MCF 10A (cell line): ENCODE measurements at regions of chr14 and their contacts with region 1.

Region 1: GRCh38 chr14:75560962-75561432 is 17.4 kb upstream of the FLVCR2 start:
- DNase-seq: peak; percentile 93
- H3K4me3 Mint-ChIP-seq: no peak overlapping the region
- H3K27ac Mint-ChIP-seq: no peak overlapping the region
- H3K4me1 Mint-ChIP-seq: peaks cover 26% of the 10 kb centered on the region
- H3K27me3 Mint-ChIP-seq: no peaks in the 10 kb centered on the region
- CTCF ChIP-seq: peak; percentile 78

Region 2: GRCh38 chr14:75293920-75294642 is 266.9 kb before region 1 on chr14:
- CTCF ChIA-PET with region 1: interaction called, 4 read pairs
- POLR2A ChIA-PET with region 1: interaction called, 10 read pairs
- intact Hi-C with region 1: no loop called
- DNase-seq: peak; percentile 96
- H3K4me3 Mint-ChIP-seq: peak overlapping the region; percentile 67
- H3K27ac Mint-ChIP-seq: peak overlapping the region; percentile 71
- H3K4me1 Mint-ChIP-seq: peaks cover 22% of the 10 kb centered on the region
- H3K27me3 Mint-ChIP-seq: no peaks in the 10 kb centered on the region
- CTCF ChIP-seq: no peak

Region 3: GRCh38 chr14:75373616-75374015 is 187.4 kb before region 1 on chr14:
- CTCF ChIA-PET with region 1: no interaction called
- POLR2A ChIA-PET with region 1: no interaction called
- intact Hi-C with region 1: no loop called
- DNase-seq: no peak
- H3K4me3 Mint-ChIP-seq: no peak overlapping the region
- H3K27ac Mint-ChIP-seq: no peak overlapping the region
- H3K4me1 Mint-ChIP-seq: no peaks in the 10 kb centered on the region
- H3K27me3 Mint-ChIP-seq: peaks cover 27% of the 10 kb centered on the region
- CTCF ChIP-seq: no peak

Region 4: DNA sequence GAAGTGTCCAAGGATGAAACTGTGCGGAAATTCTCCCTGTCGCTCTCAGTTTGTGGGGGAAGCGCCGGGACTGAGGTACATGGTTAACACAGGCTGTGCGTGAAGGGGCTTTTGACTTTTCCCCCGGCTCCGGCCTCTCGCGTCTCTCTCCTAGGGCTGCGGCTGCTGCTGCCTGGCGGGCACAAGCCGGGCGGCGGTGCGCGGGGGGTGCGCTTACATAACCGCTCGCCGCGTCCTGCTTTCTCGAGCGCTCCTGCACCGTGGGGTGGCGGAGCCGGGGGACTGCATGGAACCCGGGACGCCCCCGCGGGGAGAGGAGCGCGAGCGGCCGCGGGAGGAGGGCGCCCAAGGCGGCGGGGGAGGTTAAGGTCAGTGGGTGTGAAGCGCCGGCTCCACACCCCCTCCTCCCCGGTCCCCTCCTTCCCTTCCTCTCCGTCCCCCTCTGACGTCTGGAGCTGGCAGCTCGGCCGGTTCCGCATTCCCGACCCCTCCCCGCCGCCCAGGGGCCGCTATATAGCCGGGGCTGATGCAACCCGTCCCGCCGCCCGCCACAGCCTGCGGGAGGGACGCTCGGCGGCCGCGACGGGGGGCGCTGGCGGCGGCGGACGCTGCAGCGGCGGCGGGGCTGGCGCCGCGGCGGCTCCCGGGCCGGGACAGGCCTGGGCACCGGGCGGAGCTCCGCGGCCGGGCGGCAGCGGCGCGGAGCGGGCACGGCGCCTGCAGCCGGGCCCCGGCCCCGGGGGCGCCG is 133.3 kb before region 1 on chr14 and contains the start of gene JDP2:
- CTCF ChIA-PET with region 1: interaction called, 14 read pairs
- POLR2A ChIA-PET with region 1: interaction called, 4 read pairs
- intact Hi-C with region 1: loop called (anchors 2 kb)
- DNase-seq: peak; percentile 62
- H3K4me3 Mint-ChIP-seq: peak within 1 kb of the TSS; percentile 76
- H3K27ac Mint-ChIP-seq: no peak within 1 kb of the TSS
- H3K4me1 Mint-ChIP-seq: peaks cover 17% of the 10 kb centered on the region
- H3K27me3 Mint-ChIP-seq: no peaks in the 10 kb centered on the region
- CTCF ChIP-seq: no peak
- total RNA-seq, gene JDP2: 38.9 and 45.3 TPM in 2 replicates

Region 5: DNA sequence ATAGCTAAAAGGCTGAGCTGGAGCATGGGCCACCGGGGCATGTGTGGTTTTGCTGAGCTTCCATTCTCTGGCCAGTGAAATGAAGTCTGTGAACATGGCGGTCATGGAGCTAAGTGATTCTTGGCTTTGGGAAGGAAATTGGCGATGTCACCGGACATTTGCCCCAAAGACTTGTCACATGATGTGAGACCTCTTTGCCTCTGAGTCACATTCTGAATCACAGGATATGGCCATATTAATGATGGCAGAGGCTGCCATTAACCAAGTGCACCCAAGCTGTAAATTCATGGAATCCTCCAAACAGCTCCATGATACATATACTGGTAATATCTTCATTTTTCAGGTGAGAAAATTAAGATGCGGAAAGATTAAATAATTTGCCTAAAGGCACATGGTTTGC is 66.1 kb before region 1 on chr14:
- CTCF ChIA-PET with region 1: interaction called, 92 read pairs
- POLR2A ChIA-PET with region 1: interaction called, 19 read pairs
- intact Hi-C with region 1: no loop called
- DNase-seq: no peak
- H3K4me3 Mint-ChIP-seq: no peak overlapping the region
- H3K27ac Mint-ChIP-seq: no peak overlapping the region
- H3K4me1 Mint-ChIP-seq: no peaks in the 10 kb centered on the region
- H3K27me3 Mint-ChIP-seq: no peaks in the 10 kb centered on the region
- CTCF ChIP-seq: no peak

Region 6: GRCh38 chr14:75539561-75540478 is 21.2 kb before region 1 on chr14:
- CTCF ChIA-PET with region 1: interaction called, 11 read pairs
- POLR2A ChIA-PET with region 1: interaction called, 17 read pairs
- intact Hi-C with region 1: loop called (anchors 1 kb)
- DNase-seq: no peak
- H3K4me3 Mint-ChIP-seq: no peak overlapping the region
- H3K27ac Mint-ChIP-seq: no peak overlapping the region
- H3K4me1 Mint-ChIP-seq: peaks cover 21% of the 10 kb centered on the region
- H3K27me3 Mint-ChIP-seq: no peaks in the 10 kb centered on the region
- CTCF ChIP-seq: no peak

Region 7: GRCh38 chr14:75654127-75654732 is 93.2 kb after region 1 on chr14:
- CTCF ChIA-PET with region 1: interaction called, 31 read pairs
- POLR2A ChIA-PET with region 1: no interaction called
- intact Hi-C with region 1: no loop called
- DNase-seq: peak; percentile 76
- H3K4me3 Mint-ChIP-seq: no peak overlapping the region
- H3K27ac Mint-ChIP-seq: no peak overlapping the region
- H3K4me1 Mint-ChIP-seq: peaks cover 16% of the 10 kb centered on the region
- H3K27me3 Mint-ChIP-seq: no peaks in the 10 kb centered on the region
- CTCF ChIP-seq: peak; percentile 93